Activated T-helper 1 cell treated with anti-CD3 and anti-CD28 coated beads, Interleukin-12 subunit alpha, Interleukin-12 subunit beta, Interleukin-2, Interleukin-4 antibody, amounts not matched to agents 30 ng/mL and 10 ng/mL and 1 ng/mL, durations not matched to agents 14 hours and 24 hours and 36 hours (primary cell): ENCODE measurements at regions of chr16 and their contacts with region 1.

Region 1: GRCh38 chr16:87550496-87550961 is 51.8 kb upstream of the JPH3 start:
- DNase-seq: peak; percentile 42
- H3K4me3 Mint-ChIP-seq: no peak overlapping the region
- H3K27ac Mint-ChIP-seq: no peak overlapping the region
- H3K4me1 Mint-ChIP-seq: no peaks in the 10 kb centered on the region
- H3K27me3 Mint-ChIP-seq: peaks cover 4% of the 10 kb centered on the region

Region 2: DNA sequence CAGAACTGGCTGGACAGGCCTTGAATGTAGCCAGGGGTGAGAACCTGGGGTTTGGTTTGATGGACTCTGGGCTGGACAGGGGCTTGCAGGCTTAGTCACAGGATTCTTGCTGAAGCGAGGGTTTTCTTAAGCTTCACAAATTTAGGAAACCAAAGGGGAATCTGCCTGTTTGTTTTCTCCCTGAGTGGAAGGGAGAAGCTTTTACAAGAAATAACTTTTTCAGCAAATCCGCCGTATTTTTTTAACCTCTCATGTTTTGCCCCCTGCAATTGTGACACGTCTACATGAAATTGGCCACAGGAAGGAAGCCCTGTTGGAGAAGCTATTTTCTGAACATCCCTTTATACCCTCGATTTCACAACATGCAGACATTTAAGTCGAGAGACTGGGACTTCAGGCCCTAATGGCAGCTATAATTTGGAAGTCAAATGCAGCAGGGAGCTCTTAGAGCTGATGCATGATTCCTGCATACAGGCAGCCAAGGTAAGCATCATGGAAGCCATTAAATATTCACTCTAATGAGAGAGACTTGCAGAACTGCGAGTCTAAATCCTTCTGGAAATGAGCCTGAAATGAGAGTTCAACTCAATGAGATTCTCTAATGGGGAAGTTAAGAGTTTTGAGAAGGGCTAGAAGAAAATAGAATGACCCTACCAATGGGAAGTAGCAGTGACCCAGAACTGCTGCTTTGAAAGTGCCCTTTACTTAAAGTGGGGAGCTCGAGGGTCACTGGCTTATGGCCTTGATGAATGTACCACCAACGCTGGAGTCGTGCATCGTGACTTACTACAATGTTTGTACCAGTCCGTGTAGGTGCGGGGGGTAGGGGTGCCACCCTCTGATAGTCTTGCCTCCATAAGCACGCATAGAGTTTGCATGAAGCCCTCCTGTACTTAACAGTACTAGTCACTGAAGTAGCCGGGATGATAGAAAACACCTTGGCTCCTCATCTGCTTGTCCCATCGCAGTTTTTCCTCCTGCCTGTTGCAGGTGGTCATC is 1696.7 kb before region 1 on chr16:
- intact Hi-C with region 1: no loop called
- DNase-seq: no peak
- H3K4me3 Mint-ChIP-seq: no peak overlapping the region
- H3K27ac Mint-ChIP-seq: no peak overlapping the region
- H3K4me1 Mint-ChIP-seq: no peaks in the 10 kb centered on the region
- H3K27me3 Mint-ChIP-seq: peaks cover 10% of the 10 kb centered on the region

Region 3: GRCh38 chr16:87636072-87636684 is 85.6 kb after region 1 on chr16:
- intact Hi-C with region 1: loop called (anchors 1 kb)
- DNase-seq: peak; percentile 52
- H3K4me3 Mint-ChIP-seq: peak overlapping the region; percentile 45
- H3K27ac Mint-ChIP-seq: no peak overlapping the region
- H3K4me1 Mint-ChIP-seq: no peaks in the 10 kb centered on the region
- H3K27me3 Mint-ChIP-seq: peaks cover 11% of the 10 kb centered on the region